ENCODE measurements at regions of chr7 and their contacts with region 1.

Region 1: GRCh38 chr7:94004024-94004951 is at the start of gene BET1:
- DNase-seq: peak; percentile 88
- H3K4me3 Mint-ChIP-seq: peak within 1 kb of the TSS; percentile 97
- H3K27ac Mint-ChIP-seq: peak within 1 kb of the TSS; percentile 97
- H3K4me1 Mint-ChIP-seq: peaks cover 35% of the 10 kb centered on the region
- H3K27me3 Mint-ChIP-seq: peaks cover 4% of the 10 kb centered on the region
- total RNA-seq, gene BET1: 21.4 and 21.6 TPM in 2 replicates

Region 2: GRCh38 chr7:92375013-92375412 is 1629.3 kb before region 1 on chr7:
- intact Hi-C with region 1: no loop called
- DNase-seq: no peak
- H3K4me3 Mint-ChIP-seq: no peak overlapping the region
- H3K27ac Mint-ChIP-seq: no peak overlapping the region
- H3K4me1 Mint-ChIP-seq: no peaks in the 10 kb centered on the region
- H3K27me3 Mint-ChIP-seq: no peaks in the 10 kb centered on the region

Region 3: DNA sequence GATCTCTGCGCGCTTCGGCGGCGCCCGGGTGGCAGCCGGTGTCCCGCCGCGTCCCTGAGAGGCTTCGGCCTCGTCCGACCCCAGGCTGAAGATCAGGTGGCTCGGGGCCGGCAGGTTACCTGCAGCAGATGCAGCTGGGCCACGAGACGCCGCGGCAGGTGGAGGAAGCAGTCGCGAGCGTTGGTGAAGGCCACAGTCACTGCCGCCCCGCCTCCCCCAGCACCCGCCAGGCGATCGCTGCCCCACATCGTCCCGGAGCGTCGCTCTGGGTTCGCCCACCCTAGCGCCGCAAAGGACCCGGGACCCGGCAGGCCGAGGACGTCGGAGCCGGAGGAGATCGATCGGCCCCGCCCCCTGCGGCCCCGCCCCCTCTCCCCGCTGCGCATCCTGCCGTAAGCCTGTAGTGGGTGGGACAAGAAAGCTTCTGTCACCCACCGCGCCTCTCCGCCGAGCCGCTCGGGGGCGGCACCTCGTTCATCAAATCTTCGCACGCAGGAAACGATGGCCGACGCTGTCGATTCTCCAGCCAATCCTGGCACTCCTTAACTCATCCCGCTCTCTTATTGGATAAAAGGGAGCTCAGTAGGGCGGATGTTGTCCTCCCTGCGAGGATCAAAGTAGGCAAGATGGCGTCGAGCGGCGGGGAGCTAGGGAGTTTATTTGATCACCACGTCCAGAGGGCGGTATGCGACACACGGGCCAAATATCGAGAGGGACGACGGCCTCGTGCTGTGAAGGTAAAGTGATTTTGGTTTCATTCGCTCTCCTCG is 1475.9 kb before region 1 on chr7 and contains the starts of genes PEX1 and RBM48:
- intact Hi-C with region 1: loop called (anchors 2 kb)
- DNase-seq: peak; percentile 94
- H3K4me3 Mint-ChIP-seq: peak within 1 kb of the TSS; percentile 91
- H3K27ac Mint-ChIP-seq: peak within 1 kb of the TSS; percentile 94
- H3K4me1 Mint-ChIP-seq: peaks cover 24% of the 10 kb centered on the region
- H3K27me3 Mint-ChIP-seq: no peaks in the 10 kb centered on the region
- total RNA-seq, gene PEX1: 14.7 and 17.0 TPM in 2 replicates
- total RNA-seq, gene RBM48: 17.2 and 17.6 TPM in 2 replicates

Region 4: DNA sequence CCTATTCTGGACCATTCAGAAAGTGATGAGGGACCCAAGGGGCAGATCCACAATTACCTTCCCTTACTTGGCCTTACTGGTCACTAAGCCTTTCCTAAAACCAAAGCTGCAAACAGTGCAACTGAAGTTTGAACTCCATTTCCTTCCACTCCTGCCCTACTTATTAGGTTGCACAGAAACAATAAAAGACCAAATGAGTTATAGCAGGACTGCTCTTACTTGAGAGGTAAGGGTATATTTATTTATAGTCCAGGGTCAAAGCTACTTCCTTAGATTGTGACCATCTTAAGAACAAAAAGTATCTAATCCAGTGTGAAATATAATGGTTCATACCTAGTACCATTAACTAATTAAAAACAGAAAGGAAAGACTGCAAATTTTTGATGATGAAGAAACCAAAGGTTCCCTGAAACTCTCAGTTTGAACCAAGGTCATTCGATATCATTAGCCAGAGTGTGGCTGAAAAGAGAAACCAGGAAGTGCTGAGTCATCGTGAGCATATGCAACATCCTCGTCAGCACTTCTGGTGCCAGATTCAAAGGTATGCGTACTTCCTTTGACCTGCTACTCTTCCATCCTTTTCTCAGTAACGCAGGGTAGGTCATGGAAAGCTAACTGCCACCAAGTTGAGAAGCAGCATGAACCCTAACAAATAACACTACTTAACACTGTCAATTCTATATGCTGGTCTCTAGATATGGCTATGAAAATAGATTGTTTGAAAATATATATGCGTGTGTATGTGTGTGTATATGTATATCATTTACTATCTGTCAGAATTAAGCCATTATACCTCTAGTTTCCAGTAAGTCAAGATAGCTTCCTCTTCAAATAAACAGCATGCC is 1194.7 kb before region 1 on chr7:
- intact Hi-C with region 1: no loop called
- DNase-seq: peak; percentile 72
- H3K4me3 Mint-ChIP-seq: peak overlapping the region; percentile 66
- H3K27ac Mint-ChIP-seq: peak overlapping the region; percentile 93
- H3K4me1 Mint-ChIP-seq: peaks cover 93% of the 10 kb centered on the region
- H3K27me3 Mint-ChIP-seq: no peaks in the 10 kb centered on the region

Region 5: DNA sequence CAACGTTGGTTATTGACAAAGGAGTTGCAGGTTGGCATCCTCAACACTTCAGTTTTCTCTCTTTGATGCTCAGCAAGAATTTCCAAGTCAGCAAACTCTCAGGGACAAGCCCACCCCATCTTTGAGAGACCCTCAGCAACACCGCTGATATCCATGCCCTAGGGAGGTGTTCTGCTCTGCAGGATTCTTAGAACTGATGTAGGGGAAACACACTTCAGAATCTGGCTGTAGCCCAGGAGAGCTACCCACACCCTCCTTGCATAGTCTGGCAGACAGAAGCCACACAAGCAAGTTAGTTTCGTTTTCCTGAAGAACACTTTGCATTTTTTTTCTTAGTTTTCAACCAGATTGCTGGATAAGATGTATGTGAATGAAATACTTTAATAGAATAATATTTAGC is 856.9 kb before region 1 on chr7:
- intact Hi-C with region 1: loop called (anchors 10 kb)
- DNase-seq: peak; percentile 22
- H3K4me3 Mint-ChIP-seq: peak overlapping the region; percentile 93
- H3K27ac Mint-ChIP-seq: peak overlapping the region; percentile 87
- H3K4me1 Mint-ChIP-seq: peaks cover 68% of the 10 kb centered on the region
- H3K27me3 Mint-ChIP-seq: no peaks in the 10 kb centered on the region

Region 6: GRCh38 chr7:93921607-93922566 is 82.4 kb before region 1 on chr7 and contains the start of gene GNG11:
- intact Hi-C with region 1: loop called (anchors 5 kb)
- DNase-seq: no peak
- H3K4me3 Mint-ChIP-seq: peak within 1 kb of the TSS; percentile 51
- H3K27ac Mint-ChIP-seq: no peak within 1 kb of the TSS
- H3K4me1 Mint-ChIP-seq: no peaks in the 10 kb centered on the region
- H3K27me3 Mint-ChIP-seq: peaks cover 17% of the 10 kb centered on the region
- total RNA-seq, gene GNG11: not detected in 2 replicates

Region 7: DNA sequence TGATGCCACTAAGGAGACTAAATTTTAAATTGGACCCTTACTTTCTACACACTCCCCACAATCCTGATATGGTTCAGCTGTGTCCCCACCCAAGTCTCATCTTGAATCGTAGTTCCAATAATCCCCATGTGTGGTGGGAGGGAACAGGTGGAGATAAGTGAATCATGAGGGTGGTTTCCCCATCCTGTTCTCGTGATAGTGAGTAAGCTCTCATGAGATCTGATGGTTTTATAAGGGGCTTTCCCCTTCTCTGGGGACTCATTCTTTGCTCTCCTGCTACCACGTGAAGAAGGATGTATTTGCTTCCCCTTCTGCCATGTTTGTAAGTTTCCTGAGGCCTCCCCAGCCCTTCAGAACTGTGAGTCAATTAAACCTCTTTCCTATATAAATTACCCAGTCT is 18.3 kb after region 1 on chr7:
- intact Hi-C with region 1: no loop called
- DNase-seq: no peak
- H3K4me3 Mint-ChIP-seq: no peak overlapping the region
- H3K27ac Mint-ChIP-seq: no peak overlapping the region
- H3K4me1 Mint-ChIP-seq: peaks cover 5% of the 10 kb centered on the region
- H3K27me3 Mint-ChIP-seq: peaks cover 5% of the 10 kb centered on the region

Region 8: DNA sequence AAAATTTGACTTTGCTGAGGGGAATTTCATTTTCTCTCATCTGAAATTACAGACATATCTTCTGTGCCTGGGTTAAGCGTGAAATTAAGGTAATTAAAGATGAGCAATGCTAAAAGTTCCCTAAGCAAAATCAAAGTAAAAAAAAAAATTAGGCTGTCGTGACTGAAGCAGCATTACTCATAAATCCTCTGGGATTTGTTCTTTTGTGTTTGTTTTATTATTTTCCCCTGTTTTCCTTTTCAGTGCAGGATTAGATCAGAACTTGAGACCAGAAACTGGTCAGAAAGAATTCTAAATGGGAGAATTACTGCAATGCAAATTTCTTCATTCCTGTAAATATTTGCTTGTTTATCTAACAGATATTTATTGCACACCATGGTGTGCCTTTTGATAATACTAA is 141.3 kb after region 1 on chr7:
- intact Hi-C with region 1: no loop called
- DNase-seq: no peak
- H3K4me3 Mint-ChIP-seq: no peak overlapping the region
- H3K27ac Mint-ChIP-seq: no peak overlapping the region
- H3K4me1 Mint-ChIP-seq: no peaks in the 10 kb centered on the region
- H3K27me3 Mint-ChIP-seq: peaks cover 15% of the 10 kb centered on the region

Region 9: DNA sequence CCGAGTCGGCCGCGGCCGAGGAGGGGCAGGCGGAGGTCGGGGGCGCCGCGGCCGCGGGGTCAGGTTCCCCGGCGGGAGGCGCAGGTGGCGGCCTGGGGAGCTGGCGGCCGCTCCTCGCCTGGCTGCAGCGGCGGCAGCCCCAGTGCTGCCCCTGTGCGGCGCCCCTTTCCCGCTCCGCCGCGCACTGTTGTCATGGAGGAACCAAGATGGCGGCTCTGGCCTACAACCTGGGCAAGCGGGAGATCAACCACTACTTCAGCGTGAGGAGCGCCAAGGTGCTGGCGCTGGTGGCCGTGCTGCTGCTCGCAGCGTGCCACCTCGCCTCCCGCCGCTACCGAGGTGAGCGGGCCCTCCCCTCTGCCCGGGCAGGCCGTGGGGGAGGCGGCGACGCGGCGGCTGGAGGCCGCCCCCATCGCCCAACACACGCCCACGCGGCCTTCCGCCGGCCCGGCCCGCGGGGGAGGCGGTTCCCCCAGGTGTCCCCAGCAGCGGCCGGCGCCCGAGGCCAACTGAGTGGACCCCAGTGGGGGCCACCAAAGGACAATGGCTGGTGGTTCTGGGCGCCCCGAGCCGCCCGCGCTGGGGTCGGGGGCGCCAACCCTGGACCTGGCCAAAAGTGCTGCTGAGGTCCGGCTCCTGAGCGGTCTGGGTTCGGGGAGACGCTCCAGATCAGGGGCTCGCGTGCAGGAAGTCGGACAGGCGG is 505.7 kb after region 1 on chr7:
- intact Hi-C with region 1: loop called (anchors 1 kb)
- DNase-seq: peak; percentile 60
- H3K4me3 Mint-ChIP-seq: peak overlapping the region; percentile 86
- H3K27ac Mint-ChIP-seq: peak overlapping the region; percentile 88
- H3K4me1 Mint-ChIP-seq: peaks cover 30% of the 10 kb centered on the region
- H3K27me3 Mint-ChIP-seq: no peaks in the 10 kb centered on the region